Ascending aorta (tissue), 2 donors: ENCODE measurements at regions of chr22 and their contacts with region 1.

Region 1: DNA sequence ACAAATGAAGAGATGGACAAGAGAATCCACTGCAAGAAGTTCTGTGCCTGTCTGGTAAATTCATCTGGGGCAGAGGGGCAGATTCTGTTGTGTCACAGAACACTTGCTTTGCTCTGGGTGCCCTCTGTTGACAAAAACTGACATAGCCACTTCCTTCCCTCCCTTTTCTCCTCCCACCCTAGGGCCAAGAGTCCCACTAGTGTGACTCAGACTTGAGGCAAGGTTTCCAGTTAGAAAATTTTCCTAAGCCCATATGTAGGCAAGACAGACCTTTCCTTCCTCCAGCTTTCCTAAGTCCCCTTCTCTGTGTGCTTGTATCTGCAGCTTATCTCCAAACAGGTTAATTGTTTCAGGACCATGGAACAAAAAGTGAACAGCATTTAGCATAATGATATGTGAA is 106.8 kb downstream of the RBFOX2 start:
- DNase-seq: peak; percentile 30 to 88
- H3K4me3 ChIP-seq: no peak overlapping the region
- H3K27ac ChIP-seq: peak overlapping the region; percentile 79 to 85
- H3K4me1 ChIP-seq: peaks cover 10 to 32% of the 10 kb centered on the region in 2 donors
- H3K27me3 ChIP-seq: no peaks in the 10 kb centered on the region
- CTCF ChIP-seq: peak; percentile 60 to 81 (median 66)

Region 2: DNA sequence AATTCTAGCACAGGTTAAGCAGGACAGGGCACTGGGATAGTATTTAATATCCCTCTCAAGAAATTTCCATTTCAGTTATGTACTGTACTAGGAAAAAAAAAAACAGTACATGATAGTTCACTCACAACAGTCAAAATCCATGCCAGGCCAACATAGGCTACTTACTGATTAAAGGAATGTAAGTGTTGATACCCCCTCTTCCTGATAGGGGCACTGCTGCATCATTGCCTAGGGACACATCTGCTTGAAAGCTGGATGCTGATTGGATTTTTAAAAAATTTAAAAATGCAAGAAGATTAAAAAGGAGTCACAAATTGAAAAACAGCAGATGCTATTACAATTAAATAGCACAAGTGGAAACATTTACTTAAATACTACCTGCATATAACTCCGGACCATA is 160.7 kb before region 1 on chr22:
- intact Hi-C with region 1: loop called (anchors 5 kb)
- DNase-seq: no peak
- H3K4me3 ChIP-seq: no peak overlapping the region
- H3K27ac ChIP-seq: no peak overlapping the region
- H3K4me1 ChIP-seq: no peaks in the 10 kb centered on the region
- H3K27me3 ChIP-seq: no peaks in the 10 kb centered on the region
- CTCF ChIP-seq: peak in 2 of 3 experiments; percentile 18 to 37

Region 3: DNA sequence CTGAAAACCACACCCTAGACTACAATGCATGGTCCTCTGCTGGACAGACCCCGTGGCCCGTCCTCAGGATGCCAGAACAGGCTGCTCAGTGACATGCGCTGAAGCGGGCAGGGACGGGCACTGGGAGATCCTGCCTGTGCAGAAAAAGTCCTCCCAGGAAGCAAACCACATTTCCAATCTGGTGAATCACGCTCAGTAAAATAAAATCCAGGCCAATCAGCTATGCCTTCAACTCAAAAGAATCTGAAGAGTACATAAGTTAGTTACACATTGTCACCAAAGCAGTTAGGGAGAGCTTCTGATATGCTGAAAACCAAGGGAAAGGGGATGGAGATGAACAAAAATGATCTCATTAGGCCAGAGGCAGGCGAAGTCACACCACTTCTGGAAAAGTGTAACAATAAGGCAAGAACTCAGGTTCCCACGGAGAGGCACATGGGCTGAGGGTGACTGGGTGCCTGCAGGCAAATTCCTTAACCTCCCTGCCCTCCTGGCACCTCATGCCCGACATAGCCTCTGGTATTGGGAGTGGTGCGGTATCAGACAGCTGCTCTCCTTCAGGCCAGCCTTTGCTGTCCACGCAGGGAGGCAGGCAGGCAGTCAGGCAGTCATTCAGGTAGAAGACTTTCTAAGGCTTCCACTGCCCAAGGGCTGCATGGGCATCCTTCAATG is 137.7 kb before region 1 on chr22:
- intact Hi-C with region 1: loop called (anchors 5 kb)
- DNase-seq: no peak
- H3K4me3 ChIP-seq: no peak overlapping the region
- H3K27ac ChIP-seq: peak overlapping the region in 1 of 2 donors; percentile 26
- H3K4me1 ChIP-seq: peaks cover 6 to 43% of the 10 kb centered on the region in 2 donors
- H3K27me3 ChIP-seq: no peaks in the 10 kb centered on the region
- CTCF ChIP-seq: no peak

Region 4: GRCh38 chr22:35938226-35938625 is 16.4 kb after region 1 on chr22:
- intact Hi-C with region 1: no loop called
- DNase-seq: no peak
- H3K4me3 ChIP-seq: no peak overlapping the region
- H3K27ac ChIP-seq: no peak overlapping the region
- H3K4me1 ChIP-seq: no peaks in the 10 kb centered on the region
- H3K27me3 ChIP-seq: no peaks in the 10 kb centered on the region
- CTCF ChIP-seq: no peak